ENCODE measurements at regions of chr18 and their contacts with region 1.

Region 1: GRCh38 chr18:47680488-47680887 is 250.0 kb downstream of the SMAD2 start:
- DNase-seq: no peak
- H3K4me3 ChIP-seq: no peak overlapping the region
- H3K4me1 ChIP-seq: no peaks in the 10 kb centered on the region
- H3K27me3 ChIP-seq: no peaks in the 10 kb centered on the region

Region 2: DNA sequence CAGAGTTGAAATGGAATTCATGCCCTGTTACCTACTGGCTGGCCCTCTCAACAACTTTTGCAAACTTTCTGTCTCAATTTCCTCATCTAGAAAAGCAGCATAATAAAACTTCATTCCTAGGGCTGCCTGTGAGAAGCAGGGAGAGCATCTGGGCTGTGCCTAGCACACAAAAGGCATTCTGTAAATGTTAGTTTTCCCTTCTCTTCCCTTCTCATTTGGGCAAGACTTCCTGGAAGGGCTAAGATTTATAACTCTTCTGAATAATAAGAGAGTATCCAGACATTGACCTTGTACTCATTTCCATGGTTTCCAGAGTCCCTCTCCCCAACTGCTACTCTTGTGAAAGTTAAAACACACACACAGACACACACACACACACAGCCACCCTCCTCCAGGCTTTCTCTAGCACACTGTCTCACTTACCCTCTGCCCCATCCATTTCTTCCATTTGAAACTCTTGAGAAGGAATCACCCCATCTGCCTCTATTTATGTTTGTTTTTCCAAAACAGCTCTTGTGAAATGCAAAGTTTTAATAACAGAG is 52.2 kb before region 1 on chr18:
- in situ Hi-C with region 1: loop called (anchors 10 kb)
- DNase-seq: no peak
- H3K4me3 ChIP-seq: no peak overlapping the region
- H3K4me1 ChIP-seq: no peaks in the 10 kb centered on the region
- H3K27me3 ChIP-seq: no peaks in the 10 kb centered on the region; the same call in 1 of the 2 replicates

Measured in HAP-1 (cell line).